Dorsolateral prefrontal cortex (tissue), 120 donors: ENCODE measurements at regions of chr1 and their contacts with region 1.

Region 1: DNA sequence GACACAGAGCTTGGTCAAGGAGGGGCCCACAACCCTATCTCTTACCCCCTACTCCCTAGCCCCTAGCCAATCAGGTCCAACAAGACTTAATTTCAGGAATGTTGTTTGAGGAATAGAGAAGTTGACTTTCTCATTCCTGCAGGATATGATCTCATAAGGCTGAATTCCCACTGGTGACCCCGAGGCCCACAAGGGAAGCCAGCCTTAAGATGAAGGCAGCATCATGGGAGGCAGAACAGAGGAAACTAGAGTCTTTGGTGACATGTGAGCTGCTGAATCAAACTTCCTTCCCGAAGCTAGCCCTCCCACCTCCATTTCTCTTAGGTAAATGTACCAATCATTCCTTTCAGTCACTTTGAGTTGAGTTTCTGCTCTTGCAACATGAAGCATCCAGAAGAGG is 9.1 kb upstream of the PDIK1L start:
- DNase-seq: no peak
- H3K4me3 ChIP-seq: no peak overlapping the region
- H3K27ac ChIP-seq: no peak overlapping the region
- H3K27me3 ChIP-seq: no peaks in the 10 kb centered on the region
- CTCF ChIP-seq: no peak

Region 2: DNA sequence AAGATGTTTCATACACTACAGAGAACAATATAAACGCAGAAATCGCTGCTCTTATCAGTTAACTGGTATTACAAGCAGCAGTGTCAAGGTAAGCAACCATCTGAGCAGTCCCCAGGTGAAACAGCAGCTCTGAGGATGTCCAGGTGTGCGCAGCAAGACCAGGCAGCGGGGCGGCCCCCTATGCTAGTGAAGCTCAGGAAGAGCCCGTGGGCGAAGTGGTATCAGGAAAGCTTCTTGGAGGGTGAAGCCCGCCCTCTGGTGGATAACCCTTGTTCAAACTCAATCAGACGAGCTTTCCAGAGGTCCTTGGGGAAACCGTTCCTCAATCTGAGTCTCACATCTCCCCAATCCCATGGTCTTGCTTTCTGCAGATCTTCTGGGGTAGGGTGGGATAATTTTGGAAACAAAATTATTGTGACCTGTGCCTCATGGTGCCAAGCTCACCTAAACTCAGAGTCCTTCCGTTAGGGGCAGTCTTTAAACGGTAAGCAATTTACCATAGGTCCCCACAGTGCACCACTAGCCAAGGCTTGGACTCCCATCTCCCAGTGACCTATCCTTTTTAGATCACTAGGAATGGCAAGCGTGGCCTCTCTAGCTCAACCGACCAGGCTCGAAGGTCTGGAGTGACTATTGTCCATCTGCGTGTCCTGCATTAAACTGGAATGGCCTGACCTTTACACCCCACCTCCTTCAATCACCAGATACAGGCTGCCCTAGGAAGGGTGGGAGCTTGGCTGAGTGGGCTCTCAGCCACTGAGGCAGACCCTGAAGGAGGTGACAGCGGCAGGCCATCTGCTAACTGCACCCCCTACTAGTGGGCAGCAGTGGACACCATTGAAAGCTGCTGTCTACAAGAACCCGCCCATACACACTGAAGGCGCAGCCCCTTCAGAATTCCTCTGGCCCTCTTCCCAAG is 42.8 kb after region 1 on chr1:
- intact Hi-C with region 1: loop called (anchors 1 to 2 kb)
- DNase-seq: peak; percentile 59 to 88 (median 80)
- H3K4me3 ChIP-seq: peak overlapping the region in 16 of 59 donors; percentile 5 to 33 (median 19)
- H3K27ac ChIP-seq: no peak overlapping the region
- H3K27me3 ChIP-seq: no peaks in the 10 kb centered on the region
- CTCF ChIP-seq: peak; percentile 57 to 97 (median 89)

Region 3: DNA sequence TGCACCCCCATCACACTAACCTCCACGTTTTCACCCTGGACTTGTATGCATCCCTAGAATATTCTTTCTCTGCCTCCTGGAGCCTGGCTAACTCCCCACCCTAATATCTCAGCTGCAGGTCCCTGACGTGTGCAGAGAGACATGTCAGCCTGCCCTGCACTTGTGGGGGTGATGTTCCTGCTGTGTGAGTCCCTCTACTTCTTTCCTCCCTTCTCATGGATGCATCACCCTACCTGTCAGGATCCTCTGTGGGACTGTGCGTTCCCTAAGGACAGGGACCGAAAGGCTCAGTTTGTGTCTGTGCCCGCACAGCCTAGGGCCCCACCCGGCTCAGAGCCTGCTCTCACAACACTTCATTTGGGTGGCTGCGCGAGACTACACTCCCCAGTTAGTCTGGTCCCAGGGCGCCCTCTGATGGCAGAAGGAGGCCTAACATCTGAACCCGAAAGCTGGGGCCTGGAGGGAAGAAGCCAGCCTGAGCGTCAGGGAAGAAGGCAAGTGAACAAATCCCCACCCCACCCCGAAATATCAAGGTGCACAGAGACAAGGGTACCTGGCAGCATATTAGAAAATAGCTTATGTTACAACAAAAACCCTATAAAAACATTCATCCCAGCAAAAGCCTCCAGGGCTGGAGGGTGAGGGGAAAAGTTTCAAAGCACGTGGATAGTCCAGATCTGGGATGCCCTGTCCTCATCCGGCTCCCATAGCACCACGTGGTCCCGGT is 219.0 kb after region 1 on chr1:
- intact Hi-C with region 1: loop called (anchors 5 to 10 kb)
- DNase-seq: peak; percentile 86 to 95 (median 92)
- H3K4me3 ChIP-seq: peak overlapping the region in 15 of 59 donors; percentile 3 to 44 (median 22)
- H3K27ac ChIP-seq: peak overlapping the region in 4 of 59 donors; percentile 3 to 36 (median 12)
- H3K27me3 ChIP-seq: peaks cover 0 to 4% (median 0%) of the 10 kb centered on the region in 45 donors
- CTCF ChIP-seq: peak; percentile 65 to 97 (median 90)

Region 4: GRCh38 chr1:26363549-26364448 is 261.3 kb after region 1 on chr1:
- intact Hi-C with region 1: loop called in 1 of 2 experiments (anchors 10 kb)
- DNase-seq: peak; percentile 33 to 69 (median 60)
- H3K4me3 ChIP-seq: no peak overlapping the region
- H3K27ac ChIP-seq: no peak overlapping the region
- H3K27me3 ChIP-seq: peaks cover 0 to 59% (median 28%) of the 10 kb centered on the region in 45 donors
- CTCF ChIP-seq: peak; percentile 35 to 90 (median 77)

Region 5: GRCh38 chr1:26417111-26417759 is 314.7 kb after region 1 on chr1:
- intact Hi-C with region 1: loop called in 1 of 2 experiments (anchors 10 kb)
- DNase-seq: peak; percentile 47 to 77 (median 61)
- H3K4me3 ChIP-seq: no peak overlapping the region
- H3K27ac ChIP-seq: no peak overlapping the region
- H3K27me3 ChIP-seq: peaks cover 0 to 48% (median 28%) of the 10 kb centered on the region in 45 donors
- CTCF ChIP-seq: peak; percentile 37 to 83 (median 74)